Naive thymus-derived CD4-positive, alpha-beta T cell (primary cell): ENCODE measurements at regions of chr1 and their contacts with region 1.

Region 1: GRCh38 chr1:224513787-224514209 is 79.2 kb upstream of the WDR26 start:
- DNase-seq: peak; percentile 43 to 85 (median 72)
- ATAC-seq: peak; percentile 91
- H3K4me3 ChIP-seq: no peak overlapping the region
- H3K4me3 Mint-ChIP-seq: no peak overlapping the region
- H3K27ac ChIP-seq: no peak overlapping the region
- H3K27ac Mint-ChIP-seq: peak overlapping the region in 2 of 9 donors; percentile 1 to 14
- H3K4me1 ChIP-seq: no peaks in the 10 kb centered on the region
- H3K4me1 Mint-ChIP-seq: peaks cover 0 to 26% (median 7%) of the 10 kb centered on the region in 7 donors
- H3K27me3 ChIP-seq: no peaks in the 10 kb centered on the region
- H3K27me3 Mint-ChIP-seq: peaks cover 0 to 4% (median 0%) of the 10 kb centered on the region in 5 donors

Region 2: DNA sequence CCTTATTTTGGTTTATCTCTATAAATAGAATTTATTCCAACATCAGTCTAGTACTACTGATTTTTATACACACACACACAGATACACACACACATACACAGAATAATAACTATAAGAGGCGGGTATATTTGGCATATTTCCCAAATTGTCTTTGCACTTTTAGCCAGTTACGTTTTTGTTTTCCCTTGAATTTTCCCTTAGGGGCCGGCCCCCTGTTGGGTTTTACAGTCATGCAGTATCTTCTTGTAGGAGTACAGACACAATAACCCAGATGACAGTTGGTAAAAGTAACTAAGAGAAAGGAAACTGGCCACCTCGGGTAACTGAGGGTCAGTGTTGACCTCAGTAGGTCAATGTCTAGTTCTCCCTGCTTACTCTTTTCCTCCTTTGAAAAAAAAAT is 1648.1 kb before region 1 on chr1:
- CTCF ChIA-PET with region 1: no interaction called
- POLR2A ChIA-PET with region 1: no interaction called
- intact Hi-C with region 1: no loop called
- DNase-seq: no peak
- ATAC-seq: no peak
- H3K4me3 ChIP-seq: no peak overlapping the region
- H3K4me3 Mint-ChIP-seq: no peak overlapping the region
- H3K27ac ChIP-seq: no peak overlapping the region
- H3K27ac Mint-ChIP-seq: no peak overlapping the region
- H3K4me1 ChIP-seq: peaks cover 0 to 6% of the 10 kb centered on the region in 2 donors
- H3K4me1 Mint-ChIP-seq: peaks cover 3 to 9% (median 7%) of the 10 kb centered on the region in 7 donors
- H3K27me3 ChIP-seq: no peaks in the 10 kb centered on the region
- H3K27me3 Mint-ChIP-seq: no peaks in the 10 kb centered on the region

Region 3: GRCh38 chr1:224497714-224498573 is 15.9 kb before region 1 on chr1:
- CTCF ChIA-PET with region 1: interaction called, 11 read pairs
- POLR2A ChIA-PET with region 1: no interaction called
- intact Hi-C with region 1: loop called in 1 of 2 experiments (anchors 1 kb)
- DNase-seq: peak in 1 of 9 donors; percentile 62
- ATAC-seq: peak; percentile 88
- H3K4me3 ChIP-seq: no peak overlapping the region
- H3K4me3 Mint-ChIP-seq: peak overlapping the region in 2 of 10 donors; percentile 34 to 67
- H3K27ac ChIP-seq: no peak overlapping the region
- H3K27ac Mint-ChIP-seq: peak overlapping the region in 5 of 9 donors; percentile 19 to 91 (median 55)
- H3K4me1 ChIP-seq: peaks cover 0 to 14% of the 10 kb centered on the region in 2 donors
- H3K4me1 Mint-ChIP-seq: peaks cover 19 to 55% (median 25%) of the 10 kb centered on the region in 7 donors
- H3K27me3 ChIP-seq: no peaks in the 10 kb centered on the region
- H3K27me3 Mint-ChIP-seq: no peaks in the 10 kb centered on the region

Region 4: GRCh38 chr1:224615861-224616755 is 102.3 kb after region 1 on chr1 and contains the start of gene CNIH3:
- CTCF ChIA-PET with region 1: no interaction called
- POLR2A ChIA-PET with region 1: no interaction called
- intact Hi-C with region 1: loop called in 1 of 2 experiments (anchors 5 kb)
- DNase-seq: peak in 1 of 9 donors; percentile 42
- ATAC-seq: peak; percentile 55
- H3K4me3 ChIP-seq: peak within 1 kb of the TSS; percentile 44
- H3K4me3 Mint-ChIP-seq: peak within 1 kb of the TSS; percentile 60 to 85 (median 69)
- H3K27ac ChIP-seq: no peak within 1 kb of the TSS
- H3K27ac Mint-ChIP-seq: peak within 1 kb of the TSS in 3 of 9 donors; percentile 16 to 77 (median 46)
- H3K4me1 ChIP-seq: peaks cover 10 to 17% of the 10 kb centered on the region in 2 donors
- H3K4me1 Mint-ChIP-seq: peaks cover 10 to 34% (median 26%) of the 10 kb centered on the region in 7 donors
- H3K27me3 ChIP-seq: peaks cover 17 to 22% of the 10 kb centered on the region in 2 donors
- H3K27me3 Mint-ChIP-seq: peaks cover 48 to 84% (median 50%) of the 10 kb centered on the region in 5 donors
- total RNA-seq, gene CNIH3: 1.0 to 4.2 (median 2.2) TPM

Region 5: DNA sequence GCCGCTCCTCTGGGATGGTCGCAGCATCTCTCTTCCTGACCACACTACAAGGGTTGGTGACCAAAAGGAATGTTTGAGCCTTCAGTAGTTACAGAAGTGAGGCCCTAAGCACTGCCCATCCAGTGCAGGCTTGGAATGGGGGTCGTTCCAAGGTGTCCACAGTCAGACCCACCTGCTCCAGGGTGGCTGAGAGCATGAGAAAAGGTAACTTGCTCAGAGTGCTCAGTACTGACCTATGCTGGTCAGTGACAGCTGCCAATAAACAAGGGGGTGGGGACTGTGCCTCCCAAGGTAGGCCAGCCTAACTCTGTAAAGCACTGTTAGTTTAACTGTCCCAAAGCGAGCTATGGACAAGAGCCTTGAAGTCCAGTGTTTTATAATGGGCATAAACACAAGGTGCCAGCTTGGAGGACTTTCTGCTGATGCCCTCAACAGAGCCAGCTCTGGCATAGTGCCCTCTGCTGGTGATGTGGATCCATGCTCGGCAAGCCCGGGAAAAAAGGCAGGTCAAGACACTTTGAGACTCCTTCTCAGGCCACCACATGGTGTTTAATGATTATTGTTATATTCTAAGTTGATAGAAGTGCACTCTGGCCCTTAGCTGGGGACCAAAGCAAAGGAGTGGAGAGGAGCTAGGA is 337.5 kb after region 1 on chr1:
- CTCF ChIA-PET with region 1: interaction called, 8 read pairs
- POLR2A ChIA-PET with region 1: no interaction called
- intact Hi-C with region 1: loop called in 1 of 2 experiments (anchors 1 kb)
- DNase-seq: peak in 7 of 9 donors; percentile 3 to 51 (median 17)
- ATAC-seq: peak; percentile 38
- H3K4me3 ChIP-seq: no peak overlapping the region
- H3K4me3 Mint-ChIP-seq: no peak overlapping the region
- H3K27ac ChIP-seq: no peak overlapping the region
- H3K27ac Mint-ChIP-seq: no peak overlapping the region
- H3K4me1 ChIP-seq: no peaks in the 10 kb centered on the region
- H3K4me1 Mint-ChIP-seq: peaks cover 0 to 2% (median 0%) of the 10 kb centered on the region in 7 donors
- H3K27me3 ChIP-seq: no peaks in the 10 kb centered on the region
- H3K27me3 Mint-ChIP-seq: peaks cover 0 to 17% (median 9%) of the 10 kb centered on the region in 5 donors

Region 6: GRCh38 chr1:225977937-225978748 is 1464.3 kb after region 1 on chr1:
- CTCF ChIA-PET with region 1: no interaction called
- POLR2A ChIA-PET with region 1: no interaction called
- intact Hi-C with region 1: loop called in 1 of 2 experiments (anchors 5 kb)
- DNase-seq: no peak
- ATAC-seq: peak; percentile 30
- H3K4me3 ChIP-seq: no peak overlapping the region
- H3K4me3 Mint-ChIP-seq: no peak overlapping the region
- H3K27ac ChIP-seq: no peak overlapping the region
- H3K27ac Mint-ChIP-seq: peak overlapping the region in 1 of 9 donors; percentile 20
- H3K4me1 ChIP-seq: no peaks in the 10 kb centered on the region
- H3K4me1 Mint-ChIP-seq: peaks cover 0 to 9% (median 6%) of the 10 kb centered on the region in 7 donors
- H3K27me3 ChIP-seq: no peaks in the 10 kb centered on the region
- H3K27me3 Mint-ChIP-seq: no peaks in the 10 kb centered on the region